ENCODE measurements at regions of chr6 and their contacts with region 1.

Region 1: GRCh38 chr6:13614926-13615798 is at the start of gene NOL7:
- DNase-seq: peak; percentile 98
- H3K4me3 ChIP-seq: peak within 1 kb of the TSS; percentile 57 to 99 (median 90)
- H3K4me3 Mint-ChIP-seq: peak within 1 kb of the TSS; percentile 97 to 98
- H3K27ac ChIP-seq: peak within 1 kb of the TSS; percentile 88 to 93
- H3K27ac Mint-ChIP-seq: peak within 1 kb of the TSS; percentile 90 to 97 (median 95)
- H3K4me1 ChIP-seq: peaks cover 18 to 41% of the 10 kb centered on the region in 2 donors
- H3K4me1 Mint-ChIP-seq: peaks cover 41% of the 10 kb centered on the region
- H3K27me3 ChIP-seq: no peaks in the 10 kb centered on the region
- H3K27me3 Mint-ChIP-seq: no peaks in the 10 kb centered on the region
- CTCF ChIP-seq: peak; percentile 92
- polyA plus RNA-seq, gene NOL7: 22.7 to 58.5 (median 56.9) TPM

Region 2: GRCh38 chr6:13328076-13328874 is 286.9 kb before region 1 on chr6 and contains the start of gene TBC1D7:
- intact Hi-C with region 1: loop called in 1 of 2 experiments (anchors 5 kb)
- DNase-seq: peak; percentile 87 to 91 (median 91)
- H3K4me3 ChIP-seq: peak within 1 kb of the TSS; percentile 88 to 98 (median 92)
- H3K4me3 Mint-ChIP-seq: peak within 1 kb of the TSS; percentile 90 to 93
- H3K27ac ChIP-seq: peak within 1 kb of the TSS; percentile 75 to 92
- H3K27ac Mint-ChIP-seq: peak within 1 kb of the TSS; percentile 93 to 98 (median 96)
- H3K4me1 ChIP-seq: peaks cover 6 to 17% of the 10 kb centered on the region in 2 donors
- H3K4me1 Mint-ChIP-seq: peaks cover 21% of the 10 kb centered on the region
- H3K27me3 ChIP-seq: no peaks in the 10 kb centered on the region
- H3K27me3 Mint-ChIP-seq: no peaks in the 10 kb centered on the region
- CTCF ChIP-seq: peak; percentile 19
- polyA plus RNA-seq, gene TBC1D7: 12.2 to 34.3 (median 34.3) TPM

Region 3: DNA sequence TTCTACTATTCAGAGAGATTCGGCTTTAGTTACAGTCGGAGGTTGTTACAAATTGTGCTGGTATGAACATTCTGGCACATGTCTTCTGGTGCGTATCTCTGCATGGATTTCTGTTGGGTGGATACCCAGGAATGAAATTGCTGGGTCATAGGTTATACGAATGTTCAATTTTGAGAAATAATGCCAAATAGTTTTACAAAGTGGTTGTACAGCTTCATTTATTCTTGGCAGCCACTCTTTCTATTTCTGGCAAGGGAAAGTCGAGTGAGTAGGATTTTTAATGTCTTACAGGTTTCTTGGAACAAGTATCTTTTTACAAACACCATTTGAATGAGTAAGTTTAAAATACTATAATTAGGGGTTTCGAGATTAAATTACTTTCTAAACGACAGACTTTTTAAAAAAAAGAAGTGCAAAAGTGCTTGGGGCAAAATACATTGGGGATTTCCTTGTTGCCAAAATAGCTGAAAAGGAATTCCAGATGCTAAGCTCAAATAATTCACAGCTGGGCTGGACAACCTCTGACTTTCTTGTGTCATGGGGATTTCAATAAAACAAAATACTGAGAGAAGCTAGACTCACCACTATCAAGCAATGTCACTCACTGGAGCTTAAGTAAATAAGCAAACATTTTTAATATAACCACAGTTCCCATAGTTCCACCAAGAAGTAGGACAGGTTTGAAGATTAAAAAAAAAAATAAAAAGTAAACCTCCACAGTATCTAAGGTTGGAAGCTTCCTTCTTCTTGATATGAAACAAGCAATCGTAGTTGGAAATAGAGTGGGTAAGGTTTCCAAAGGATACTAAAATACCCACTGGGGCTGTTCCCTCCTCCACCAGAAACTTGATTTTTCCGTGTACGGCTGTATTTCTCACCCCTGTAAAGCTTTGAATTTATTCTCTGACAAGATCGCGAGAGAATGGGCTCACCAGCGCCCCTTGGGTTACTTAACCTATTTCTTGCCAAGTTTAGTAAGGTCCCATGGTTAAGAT is 106.2 kb before region 1 on chr6:
- intact Hi-C with region 1: no loop called
- DNase-seq: no peak
- H3K4me3 ChIP-seq: no peak overlapping the region
- H3K4me3 Mint-ChIP-seq: no peak overlapping the region
- H3K27ac ChIP-seq: no peak overlapping the region
- H3K27ac Mint-ChIP-seq: no peak overlapping the region
- H3K4me1 ChIP-seq: no peaks in the 10 kb centered on the region
- H3K4me1 Mint-ChIP-seq: peaks cover 6% of the 10 kb centered on the region
- H3K27me3 ChIP-seq: no peaks in the 10 kb centered on the region
- H3K27me3 Mint-ChIP-seq: peaks cover 3 to 6% (median 5%) of the 10 kb centered on the region in 3 donors
- CTCF ChIP-seq: no peak

Region 4: DNA sequence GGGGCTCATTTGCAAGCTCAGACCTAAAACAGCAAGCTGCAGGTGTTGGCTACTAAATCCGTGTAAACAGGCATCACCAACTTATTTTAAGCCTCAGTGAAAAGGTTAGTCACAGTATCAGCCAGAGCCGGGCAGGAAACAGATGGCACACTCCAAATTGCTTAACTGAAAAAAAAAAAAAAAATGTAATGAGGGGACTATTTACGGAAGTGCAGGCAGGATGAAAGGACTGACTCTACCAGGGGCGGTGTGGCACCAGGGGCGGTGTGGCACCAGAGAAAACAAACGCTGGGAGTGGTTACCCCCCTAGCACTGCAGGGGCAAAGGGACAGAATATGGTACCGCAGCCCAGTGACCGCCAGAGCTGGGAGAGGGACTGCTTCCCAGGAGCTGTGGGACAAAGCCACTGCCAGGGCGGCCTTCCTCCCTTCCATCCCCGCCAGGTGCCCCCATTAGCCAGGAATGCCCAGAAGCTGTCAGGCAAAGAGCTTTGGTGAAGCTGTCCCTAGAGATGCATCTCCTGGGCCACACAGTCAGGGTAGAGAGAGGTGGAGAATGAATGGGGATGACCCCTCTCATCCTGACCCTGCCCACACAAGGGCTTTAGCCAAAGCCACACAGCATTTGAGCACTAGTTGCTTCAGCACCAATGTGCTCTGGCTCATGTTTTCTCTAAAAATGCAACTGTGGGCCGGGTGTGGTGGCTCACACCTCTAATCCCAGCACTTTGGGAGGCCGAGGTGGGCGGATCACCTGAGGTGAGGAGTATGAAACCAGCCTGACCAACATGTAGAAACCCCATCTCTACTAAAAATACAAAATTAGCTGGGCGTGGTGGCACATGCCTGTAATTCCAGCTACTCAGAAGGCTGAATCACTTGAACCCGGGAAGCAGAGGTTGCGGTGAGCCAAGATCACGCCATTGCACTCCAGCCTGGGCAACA is 88.2 kb before region 1 on chr6:
- intact Hi-C with region 1: no loop called
- DNase-seq: peak; percentile 83 to 90 (median 90)
- H3K4me3 ChIP-seq: no peak overlapping the region
- H3K4me3 Mint-ChIP-seq: peak overlapping the region in 1 of 2 donors; percentile 51
- H3K27ac ChIP-seq: peak overlapping the region; percentile 79 to 93
- H3K27ac Mint-ChIP-seq: peak overlapping the region; percentile 79 to 91 (median 87)
- H3K4me1 ChIP-seq: peaks cover 32 to 35% of the 10 kb centered on the region in 2 donors
- H3K4me1 Mint-ChIP-seq: peaks cover 40% of the 10 kb centered on the region
- H3K27me3 ChIP-seq: no peaks in the 10 kb centered on the region
- H3K27me3 Mint-ChIP-seq: peaks cover 0 to under 1% (median 0%) of the 10 kb centered on the region in 3 donors
- CTCF ChIP-seq: peak; percentile 3

Region 5: GRCh38 chr6:13574149-13574570 is 41.0 kb before region 1 on chr6:
- intact Hi-C with region 1: loop called in 1 of 2 experiments (anchors 5 kb)
- DNase-seq: peak; percentile 85 to 89 (median 86)
- H3K4me3 ChIP-seq: peak overlapping the region; percentile 71 to 94 (median 87)
- H3K4me3 Mint-ChIP-seq: peak overlapping the region; percentile 96 to 97
- H3K27ac ChIP-seq: peak overlapping the region; percentile 92
- H3K27ac Mint-ChIP-seq: peak overlapping the region; percentile 95 to 99 (median 97)
- H3K4me1 ChIP-seq: peaks cover 11 to 16% of the 10 kb centered on the region in 2 donors
- H3K4me1 Mint-ChIP-seq: peaks cover 17% of the 10 kb centered on the region
- H3K27me3 ChIP-seq: no peaks in the 10 kb centered on the region
- H3K27me3 Mint-ChIP-seq: peaks cover 4 to 6% (median 4%) of the 10 kb centered on the region in 3 donors
- CTCF ChIP-seq: peak; percentile 40

Region 6: GRCh38 chr6:13668291-13668928 is 53.2 kb after region 1 on chr6:
- intact Hi-C with region 1: loop called in 1 of 2 experiments (anchors 5 kb)
- DNase-seq: peak; percentile 21 to 50 (median 36)
- H3K4me3 ChIP-seq: no peak overlapping the region
- H3K4me3 Mint-ChIP-seq: no peak overlapping the region
- H3K27ac ChIP-seq: no peak overlapping the region
- H3K27ac Mint-ChIP-seq: peak overlapping the region in 6 of 7 donors; percentile 41 to 82 (median 60)
- H3K4me1 ChIP-seq: peaks cover 20 to 36% of the 10 kb centered on the region in 2 donors
- H3K4me1 Mint-ChIP-seq: peaks cover 75% of the 10 kb centered on the region
- H3K27me3 ChIP-seq: no peaks in the 10 kb centered on the region
- H3K27me3 Mint-ChIP-seq: peaks cover 0 to 2% (median 0%) of the 10 kb centered on the region in 3 donors
- CTCF ChIP-seq: no peak

Region 7: GRCh38 chr6:13711733-13712598 is 96.8 kb after region 1 on chr6 and contains the start of gene RANBP9:
- intact Hi-C with region 1: loop called (anchors 5 to 10 kb)
- DNase-seq: peak; percentile 53 to 67 (median 65)
- H3K4me3 ChIP-seq: peak within 1 kb of the TSS; percentile 67 to 95 (median 85)
- H3K4me3 Mint-ChIP-seq: peak within 1 kb of the TSS; percentile 97 to 99
- H3K27ac ChIP-seq: peak within 1 kb of the TSS; percentile 86 to 92
- H3K27ac Mint-ChIP-seq: peak within 1 kb of the TSS; percentile 90 to 96 (median 94)
- H3K4me1 ChIP-seq: peaks cover 39 to 54% of the 10 kb centered on the region in 2 donors
- H3K4me1 Mint-ChIP-seq: peaks cover 56% of the 10 kb centered on the region
- H3K27me3 ChIP-seq: no peaks in the 10 kb centered on the region
- H3K27me3 Mint-ChIP-seq: peaks cover 0 to 2% (median 0%) of the 10 kb centered on the region in 3 donors
- CTCF ChIP-seq: no peak
- polyA plus RNA-seq, gene RANBP9: 1.8 to 26.1 (median 2.0) TPM